ENCODE measurements at regions of chr9 and their contacts with region 1.

Region 1: DNA sequence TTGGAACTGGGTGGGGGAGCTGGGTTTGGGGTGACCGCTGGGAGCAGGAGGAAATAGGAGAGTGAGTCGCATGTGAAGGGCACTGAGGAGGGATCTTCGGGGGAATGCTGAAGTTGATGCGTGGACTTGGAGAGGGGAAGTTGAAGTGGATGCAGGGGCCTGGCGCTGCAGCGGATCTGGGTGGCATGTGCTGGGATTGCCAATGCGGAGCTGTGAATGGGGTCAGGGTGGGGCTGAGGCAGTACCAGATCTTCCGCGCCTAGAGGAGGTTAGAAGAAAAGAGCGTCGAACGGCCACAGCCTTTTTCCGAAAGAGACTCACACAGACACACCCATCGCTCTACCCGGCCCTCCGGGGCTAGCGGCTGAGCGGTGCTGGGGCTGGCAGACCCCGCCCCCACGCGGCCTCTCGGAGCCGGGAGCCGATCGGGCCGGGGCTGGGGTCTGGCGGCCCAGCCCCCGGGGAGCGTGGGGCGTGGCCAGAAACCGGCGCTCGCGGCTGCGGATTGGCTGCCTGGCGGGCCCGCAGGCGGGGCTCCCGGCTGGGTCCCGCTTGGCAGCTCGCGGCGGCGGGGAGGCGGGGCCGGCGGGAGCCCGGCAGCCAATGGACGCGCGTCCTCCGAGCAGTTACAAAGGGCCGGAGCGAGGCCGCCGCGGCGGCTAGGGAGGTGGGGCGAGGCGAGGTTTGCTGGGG is at the start of gene TGFBR1:
- DNase-seq: peak; percentile 95
- H3K4me3 ChIP-seq: peak within 1 kb of the TSS; percentile 78
- H3K27ac ChIP-seq: peak within 1 kb of the TSS; percentile 31
- H3K4me1 ChIP-seq: peaks cover 46% of the 10 kb centered on the region
- CTCF ChIP-seq: no peak
- total RNA-seq, gene TGFBR1: 13.6 and 14.3 TPM in 2 replicates

Region 2: DNA sequence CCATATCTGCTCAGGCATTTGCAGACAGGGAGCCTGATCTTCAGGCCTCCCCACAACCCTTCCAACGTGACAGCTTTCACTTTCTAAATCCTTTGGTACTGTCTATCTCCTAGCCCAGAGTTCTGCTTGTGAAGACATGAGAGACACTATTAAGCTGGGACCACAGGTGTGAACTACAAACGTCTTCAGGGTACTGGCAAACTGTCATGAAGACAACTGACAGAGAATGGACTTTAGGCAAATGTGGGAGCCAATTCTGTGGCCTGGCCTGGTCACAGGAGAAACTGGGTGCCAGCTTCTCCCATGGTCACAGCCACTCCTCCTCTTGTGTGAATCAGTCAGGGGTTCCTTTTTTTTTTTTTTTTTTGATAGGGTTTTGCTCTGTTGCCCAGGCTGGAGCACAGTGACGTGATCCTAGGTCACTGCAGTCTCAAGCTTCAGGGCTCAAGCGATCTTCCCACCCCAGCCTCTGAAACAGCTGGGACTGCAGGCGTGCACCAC is 996.0 kb before region 1 on chr9:
- CTCF ChIA-PET with region 1: no interaction called
- POLR2A ChIA-PET with region 1: no interaction called
- intact Hi-C with region 1: no loop called
- DNase-seq: peak; percentile 83
- H3K4me3 ChIP-seq: peak overlapping the region; percentile 1
- H3K27ac ChIP-seq: peak overlapping the region; percentile 92
- H3K4me1 ChIP-seq: peaks cover 64% of the 10 kb centered on the region
- CTCF ChIP-seq: no peak

Region 3: DNA sequence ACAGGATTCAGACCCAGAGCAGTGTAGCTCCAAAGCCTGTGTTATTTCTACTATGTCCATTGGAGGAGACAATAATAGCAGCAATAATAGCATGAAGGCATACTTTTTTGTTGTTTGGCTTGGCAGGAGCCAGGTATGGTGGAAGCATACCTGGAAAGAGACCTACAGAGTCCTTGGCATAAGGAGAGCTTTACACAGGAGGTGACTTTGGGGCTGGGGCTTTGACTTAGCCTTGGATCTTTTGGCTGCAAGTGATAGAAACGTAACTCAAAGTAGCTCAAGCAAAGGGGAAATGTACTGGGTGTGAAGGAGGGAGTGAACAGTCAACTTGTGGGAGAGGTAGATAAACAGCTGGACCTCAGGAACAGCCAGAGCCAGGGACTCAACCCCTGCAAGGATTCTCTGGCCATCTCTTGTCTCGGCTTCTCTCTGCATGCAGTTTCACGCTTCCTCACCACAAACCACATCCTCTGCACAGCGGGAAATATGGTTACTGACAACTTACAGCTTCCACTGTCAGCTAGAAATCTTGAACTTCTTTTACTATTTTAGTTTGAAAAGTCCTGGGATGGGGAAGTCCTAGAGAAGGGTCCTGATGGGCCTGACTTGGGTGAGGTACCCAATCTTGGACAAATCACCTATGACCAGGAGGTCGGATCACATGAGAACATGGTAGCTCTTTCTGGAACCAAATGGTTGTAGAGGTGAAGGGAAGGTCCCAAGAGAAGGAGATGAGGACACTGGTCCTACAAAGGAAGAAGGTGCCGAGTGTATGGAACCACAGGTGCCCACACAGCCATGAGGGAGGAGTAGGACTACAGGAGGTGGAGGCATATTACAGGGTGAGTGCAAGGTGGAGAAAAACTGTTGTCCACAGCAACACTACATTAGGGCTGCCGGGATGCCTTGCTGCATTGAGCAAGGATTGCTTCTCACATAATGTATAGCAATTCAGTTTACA is 46.7 kb before region 1 on chr9:
- CTCF ChIA-PET with region 1: no interaction called
- POLR2A ChIA-PET with region 1: interaction called, 14 read pairs
- intact Hi-C with region 1: loop called (anchors 2 kb)
- DNase-seq: peak; percentile 83
- H3K4me3 ChIP-seq: peak overlapping the region; percentile 41
- H3K27ac ChIP-seq: peak overlapping the region; percentile 34
- H3K4me1 ChIP-seq: peaks cover 33% of the 10 kb centered on the region
- CTCF ChIP-seq: no peak

Region 4: DNA sequence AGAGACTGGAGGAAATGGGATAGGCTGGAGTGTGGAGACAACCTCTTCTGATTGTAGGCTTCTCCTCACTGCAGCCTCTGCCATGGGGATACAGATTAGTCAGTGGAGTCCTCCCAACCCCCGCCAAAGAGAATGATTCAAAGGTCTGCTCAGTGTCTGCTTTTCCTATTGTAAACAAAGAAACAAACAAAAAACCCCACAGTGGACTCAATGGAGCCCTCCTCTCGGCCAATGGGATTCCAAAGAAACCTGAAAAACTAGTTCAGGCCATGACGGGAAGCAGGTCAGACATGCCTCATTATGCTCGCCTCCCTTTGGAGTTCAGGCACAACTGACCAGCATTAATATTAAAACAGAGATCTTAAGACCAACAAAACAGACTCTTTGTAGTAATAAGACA is 203.2 kb after region 1 on chr9:
- CTCF ChIA-PET with region 1: no interaction called
- POLR2A ChIA-PET with region 1: no interaction called
- intact Hi-C with region 1: no loop called
- DNase-seq: no peak
- H3K4me3 ChIP-seq: no peak overlapping the region
- H3K27ac ChIP-seq: no peak overlapping the region
- H3K4me1 ChIP-seq: no peaks in the 10 kb centered on the region
- CTCF ChIP-seq: no peak